ENCODE measurements at regions of chr5 and their contacts with region 1.

Region 1: GRCh38 chr5:135565725-135566421 is 12.9 kb downstream of the CXCL14 start:
- DNase-seq: peak; percentile 81
- H3K4me3 Mint-ChIP-seq: no peak overlapping the region
- H3K27ac Mint-ChIP-seq: no peak overlapping the region
- H3K4me1 Mint-ChIP-seq: peaks cover 1% of the 10 kb centered on the region
- H3K27me3 Mint-ChIP-seq: peaks cover 9% of the 10 kb centered on the region

Region 2: DNA sequence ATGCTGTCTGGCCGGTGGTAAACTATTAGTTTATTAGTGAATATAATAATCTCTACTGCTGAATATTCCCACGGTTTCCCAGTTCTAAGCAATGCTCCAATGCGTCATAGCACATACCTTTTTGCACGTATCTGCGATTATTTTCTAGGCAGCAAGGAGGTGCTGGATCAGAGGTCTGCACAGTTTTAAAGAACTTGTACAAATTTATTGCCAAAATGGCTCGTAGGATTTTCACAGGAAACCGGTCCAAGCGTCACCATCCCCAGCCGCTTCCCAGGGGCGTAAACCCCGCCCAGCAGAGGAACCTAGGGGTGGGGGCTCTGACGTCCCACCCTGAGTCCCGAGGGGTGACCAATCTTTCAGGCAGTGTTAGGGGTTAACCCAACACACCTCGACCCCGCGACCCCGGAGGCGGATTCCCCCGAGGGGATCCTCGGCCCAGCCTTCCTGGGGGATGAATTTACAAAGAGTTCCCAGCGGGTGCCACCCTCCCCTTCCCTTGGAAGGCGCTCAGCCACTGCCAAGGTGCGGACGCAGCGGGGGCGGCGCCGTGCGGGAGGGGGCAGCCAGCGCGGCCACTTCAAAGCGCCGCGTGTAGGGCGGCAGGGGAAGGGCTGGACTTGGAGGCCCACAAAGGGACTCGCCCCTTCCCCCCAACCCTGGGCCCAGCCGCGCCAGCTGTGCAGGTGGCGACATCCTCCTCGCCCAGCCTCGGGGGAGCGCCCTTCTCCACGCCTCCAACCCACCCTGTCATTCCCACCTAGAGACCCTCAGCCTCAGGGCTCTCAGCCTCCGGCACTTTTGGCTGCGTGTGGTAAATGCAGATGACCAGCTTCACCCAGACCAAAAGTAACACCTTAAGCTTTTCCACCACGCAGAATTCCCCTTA is 1494.9 kb before region 1 on chr5:
- CTCF ChIA-PET with region 1: no interaction called
- intact Hi-C with region 1: no loop called
- DNase-seq: peak; percentile 85
- H3K4me3 Mint-ChIP-seq: peak overlapping the region; percentile 79
- H3K27ac Mint-ChIP-seq: peak overlapping the region; percentile 97
- H3K4me1 Mint-ChIP-seq: peaks cover 70% of the 10 kb centered on the region
- H3K27me3 Mint-ChIP-seq: no peaks in the 10 kb centered on the region

Region 3: GRCh38 chr5:135466178-135467050 is 99.5 kb before region 1 on chr5:
- CTCF ChIA-PET with region 1: interaction called, 93 read pairs
- intact Hi-C with region 1: loop called (anchors 1 kb)
- DNase-seq: peak; percentile 85
- H3K4me3 Mint-ChIP-seq: peak overlapping the region; percentile 49
- H3K27ac Mint-ChIP-seq: no peak overlapping the region
- H3K4me1 Mint-ChIP-seq: peaks cover 6% of the 10 kb centered on the region
- H3K27me3 Mint-ChIP-seq: peaks cover 28% of the 10 kb centered on the region

Region 4: DNA sequence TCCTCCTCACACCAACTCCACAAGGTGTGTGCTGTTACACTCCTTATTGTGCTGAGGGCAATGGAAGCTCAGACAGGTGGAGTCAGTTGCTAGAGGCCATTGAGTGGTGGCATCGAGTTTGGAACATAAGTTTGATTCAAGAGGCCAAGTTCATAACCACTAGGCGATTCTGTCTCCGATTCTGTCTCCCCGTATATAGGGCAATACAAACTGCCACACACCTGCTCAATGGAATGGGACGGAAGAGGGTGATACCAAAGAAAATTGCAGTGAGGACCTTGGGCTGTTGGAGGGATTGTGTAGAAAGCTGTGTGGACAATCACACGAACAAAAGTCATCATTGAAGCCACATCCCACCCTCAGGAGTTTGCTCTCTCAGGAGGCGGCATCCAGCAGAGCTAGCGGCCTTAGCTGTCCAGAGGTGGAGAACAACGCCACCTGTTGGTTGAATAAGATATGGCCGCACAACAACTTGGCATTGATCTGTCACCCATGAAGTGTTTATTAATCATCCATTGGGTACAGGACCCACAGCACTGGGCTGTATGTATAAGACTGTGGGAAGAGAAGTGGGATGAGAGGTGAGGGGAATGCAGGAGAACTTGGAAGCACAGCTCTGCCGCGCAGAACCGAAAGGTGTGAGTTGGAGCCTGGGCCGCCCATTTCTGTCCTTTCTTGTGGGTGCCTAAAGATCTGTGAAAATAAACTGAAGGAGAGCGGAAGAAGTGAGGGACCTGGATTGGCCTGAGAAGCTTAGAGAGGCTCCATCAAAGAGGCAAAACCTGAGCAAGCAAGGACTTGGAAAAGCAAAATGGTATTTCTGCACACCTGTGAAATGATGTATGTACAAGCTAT is 14.1 kb before region 1 on chr5:
- CTCF ChIA-PET with region 1: interaction called, 82 read pairs
- intact Hi-C with region 1: no loop called
- DNase-seq: peak; percentile 82
- H3K4me3 Mint-ChIP-seq: no peak overlapping the region
- H3K27ac Mint-ChIP-seq: no peak overlapping the region
- H3K4me1 Mint-ChIP-seq: no peaks in the 10 kb centered on the region
- H3K27me3 Mint-ChIP-seq: peaks cover 45% of the 10 kb centered on the region

Region 5: GRCh38 chr5:135578685-135579341 is 12.9 kb after region 1 on chr5 and contains the start of gene CXCL14:
- CTCF ChIA-PET with region 1: interaction called, 19 read pairs
- intact Hi-C with region 1: no loop called
- DNase-seq: peak; percentile 66
- H3K4me3 Mint-ChIP-seq: no peak within 1 kb of the TSS
- H3K27ac Mint-ChIP-seq: no peak within 1 kb of the TSS
- H3K4me1 Mint-ChIP-seq: peaks cover 4% of the 10 kb centered on the region
- H3K27me3 Mint-ChIP-seq: peaks cover 42% of the 10 kb centered on the region
- total RNA-seq, gene CXCL14: not detected

Region 6: DNA sequence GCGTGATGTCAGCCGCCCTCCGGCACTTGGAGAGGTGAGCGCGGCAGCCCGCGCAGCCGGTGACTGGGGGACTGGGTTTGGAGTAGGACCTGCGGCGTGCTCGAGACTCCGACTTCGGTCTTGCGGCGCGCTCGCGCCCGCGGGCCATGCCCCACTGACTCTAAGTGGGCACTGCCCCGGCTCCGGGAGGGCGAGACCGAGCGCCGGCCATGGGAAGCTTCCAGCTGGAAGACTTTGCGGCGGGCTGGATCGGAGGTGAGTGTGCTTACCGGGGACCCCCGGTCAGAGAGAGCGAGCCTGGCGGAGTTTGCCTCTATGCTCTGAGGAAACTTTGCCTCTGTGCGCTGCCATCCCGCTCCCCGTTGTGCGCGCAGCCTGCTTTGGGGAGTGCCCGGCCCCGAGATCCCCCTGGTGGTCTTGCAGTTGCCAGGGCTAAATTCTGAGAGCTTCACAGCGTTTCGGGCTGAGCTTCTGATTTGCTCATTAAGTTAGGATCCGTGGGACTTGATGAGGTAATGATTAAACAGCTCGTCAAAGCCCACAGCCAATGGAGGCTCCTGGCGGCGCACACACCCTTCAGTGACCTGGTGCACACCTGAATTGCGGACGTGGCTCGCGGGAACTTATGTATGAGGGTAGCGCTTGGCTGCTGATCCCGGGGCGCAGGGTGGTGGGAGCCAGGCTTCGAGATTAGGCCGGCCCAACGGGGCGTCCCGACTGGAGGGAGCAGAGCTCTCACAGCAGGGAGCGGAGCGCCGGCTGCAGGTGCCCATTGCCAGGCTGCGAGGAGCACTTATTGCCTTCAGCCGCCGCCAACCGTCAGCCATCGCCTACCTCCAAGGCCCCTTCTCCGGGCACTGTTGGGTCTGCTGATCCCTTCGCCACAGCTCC is 269.0 kb after region 1 on chr5 and contains the start of gene SLC25A48:
- CTCF ChIA-PET with region 1: interaction called, 16 read pairs
- intact Hi-C with region 1: loop called (anchors 1 kb)
- DNase-seq: peak; percentile 36
- H3K4me3 Mint-ChIP-seq: no peak within 1 kb of the TSS
- H3K27ac Mint-ChIP-seq: no peak within 1 kb of the TSS
- H3K4me1 Mint-ChIP-seq: peaks cover 4% of the 10 kb centered on the region
- H3K27me3 Mint-ChIP-seq: peaks cover 56% of the 10 kb centered on the region
- total RNA-seq, gene SLC25A48: not detected

Region 7: DNA sequence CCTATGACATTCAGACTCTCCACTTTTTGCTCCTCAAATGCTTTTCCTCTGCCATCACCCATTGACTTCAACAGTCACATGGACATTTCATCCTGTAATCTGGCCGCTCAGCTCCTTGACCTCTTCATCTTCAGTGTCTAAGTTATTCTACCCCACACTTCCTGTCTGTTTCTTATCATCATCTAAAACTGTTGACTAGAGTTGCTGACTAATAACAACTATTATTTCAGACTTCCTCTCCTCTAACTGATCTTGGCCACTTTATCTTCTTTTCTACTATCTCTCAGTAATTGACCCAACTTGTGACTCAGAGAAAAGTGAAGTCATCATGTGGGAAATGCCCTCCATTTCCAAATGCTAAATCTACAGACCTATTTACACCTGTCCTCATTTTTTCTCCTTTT is 1054.1 kb after region 1 on chr5:
- CTCF ChIA-PET with region 1: no interaction called
- intact Hi-C with region 1: no loop called
- DNase-seq: no peak
- H3K4me3 Mint-ChIP-seq: no peak overlapping the region
- H3K27ac Mint-ChIP-seq: no peak overlapping the region
- H3K4me1 Mint-ChIP-seq: no peaks in the 10 kb centered on the region
- H3K27me3 Mint-ChIP-seq: no peaks in the 10 kb centered on the region

Measured in activated naive CD4-positive, alpha-beta T cell treated with anti-CD3 and anti-CD28 coated beads for 36 hours (primary cell).